ENCODE measurements at regions of chr2 and their contacts with region 1.

Region 1: DNA sequence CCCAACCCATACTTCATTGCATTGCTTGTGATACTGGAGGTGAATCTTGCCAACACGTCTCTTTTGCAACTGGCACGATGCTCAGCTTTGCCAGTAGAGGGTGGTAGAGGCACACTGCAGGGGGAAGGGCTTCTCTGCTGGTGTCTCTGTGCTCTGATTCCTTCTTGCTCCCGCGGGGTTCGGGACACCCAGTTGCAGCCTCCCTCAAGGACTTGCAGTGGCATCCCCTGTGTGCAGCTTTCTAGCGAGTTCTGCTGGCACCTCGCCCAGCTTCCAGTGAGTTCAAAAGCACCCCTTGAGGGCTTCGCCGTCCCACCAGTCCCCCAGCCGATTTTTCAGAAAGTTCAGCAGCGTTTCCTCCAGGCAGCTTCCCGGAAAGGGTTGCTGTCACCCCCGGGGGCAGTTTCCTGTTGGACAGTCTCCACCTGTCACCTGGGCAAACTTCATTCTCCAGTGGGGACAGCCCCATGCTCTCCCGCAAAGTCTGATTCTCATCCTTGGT is 35.3 kb upstream of the EN1 start:
- DNase-seq: peak; percentile 60 to 69
- H3K4me3 ChIP-seq: peak overlapping the region in 1 of 2 donors; percentile 8
- H3K27ac ChIP-seq: no peak overlapping the region
- H3K4me1 ChIP-seq: peaks cover 0 to 3% (median 1%) of the 10 kb centered on the region in 4 donors
- H3K27me3 ChIP-seq: peaks cover 0 to 34% of the 10 kb centered on the region in 2 donors
- CTCF ChIP-seq: peak; percentile 65 to 76

Region 2: DNA sequence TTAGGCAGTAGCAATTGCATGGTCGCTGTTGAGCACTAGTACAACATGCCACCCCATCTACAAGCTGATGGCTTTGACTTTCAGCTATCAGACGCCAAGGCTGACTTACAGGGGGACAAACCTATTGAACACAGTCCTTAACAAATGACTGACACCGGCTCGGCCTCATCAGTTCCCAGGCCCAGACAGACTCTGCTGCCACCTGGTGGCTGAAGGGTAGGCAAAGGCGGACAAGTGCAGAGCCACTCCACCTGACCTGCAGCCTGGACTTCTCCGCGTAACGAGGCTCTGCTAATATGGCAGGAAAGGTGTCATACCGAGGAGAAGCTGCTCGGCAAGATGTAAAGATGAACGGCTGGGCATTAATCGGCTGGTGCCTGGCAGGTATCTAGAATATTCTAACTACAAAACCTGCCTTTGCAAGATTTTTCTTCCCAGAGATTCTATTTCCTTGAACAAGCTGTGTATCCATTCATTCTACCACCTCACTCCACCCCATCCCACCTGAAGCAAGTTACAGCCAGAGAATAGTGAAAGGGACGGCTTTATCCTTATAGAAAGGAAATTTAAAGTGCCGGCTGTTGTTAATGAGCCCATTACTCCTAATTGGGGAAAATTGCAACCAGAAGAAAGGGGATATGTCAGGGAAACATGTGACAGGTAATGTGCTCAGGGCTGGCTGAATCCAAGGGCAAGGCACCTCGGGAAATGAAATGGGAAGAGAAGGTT is 408.3 kb after region 1 on chr2:
- intact Hi-C with region 1: loop called (anchors 10 kb)
- DNase-seq: no peak
- H3K4me3 ChIP-seq: no peak overlapping the region
- H3K27ac ChIP-seq: no peak overlapping the region
- H3K4me1 ChIP-seq: no peaks in the 10 kb centered on the region
- H3K27me3 ChIP-seq: no peaks in the 10 kb centered on the region
- CTCF ChIP-seq: no peak

Region 3: GRCh38 chr2:119476301-119477021 is 593.7 kb after region 1 on chr2:
- intact Hi-C with region 1: loop called (anchors 10 kb)
- DNase-seq: peak in 1 of 2 donors; percentile 67
- H3K4me3 ChIP-seq: no peak overlapping the region
- H3K27ac ChIP-seq: no peak overlapping the region
- H3K4me1 ChIP-seq: peaks cover 0 to 7% (median 3%) of the 10 kb centered on the region in 4 donors
- H3K27me3 ChIP-seq: peaks cover 0 to 15% of the 10 kb centered on the region in 2 donors
- CTCF ChIP-seq: peak; percentile 83 to 95

Measured in tibial artery (tissue), 4 donors.